ENCODE measurements at regions of chr2 and their contacts with region 1.

Region 1: DNA sequence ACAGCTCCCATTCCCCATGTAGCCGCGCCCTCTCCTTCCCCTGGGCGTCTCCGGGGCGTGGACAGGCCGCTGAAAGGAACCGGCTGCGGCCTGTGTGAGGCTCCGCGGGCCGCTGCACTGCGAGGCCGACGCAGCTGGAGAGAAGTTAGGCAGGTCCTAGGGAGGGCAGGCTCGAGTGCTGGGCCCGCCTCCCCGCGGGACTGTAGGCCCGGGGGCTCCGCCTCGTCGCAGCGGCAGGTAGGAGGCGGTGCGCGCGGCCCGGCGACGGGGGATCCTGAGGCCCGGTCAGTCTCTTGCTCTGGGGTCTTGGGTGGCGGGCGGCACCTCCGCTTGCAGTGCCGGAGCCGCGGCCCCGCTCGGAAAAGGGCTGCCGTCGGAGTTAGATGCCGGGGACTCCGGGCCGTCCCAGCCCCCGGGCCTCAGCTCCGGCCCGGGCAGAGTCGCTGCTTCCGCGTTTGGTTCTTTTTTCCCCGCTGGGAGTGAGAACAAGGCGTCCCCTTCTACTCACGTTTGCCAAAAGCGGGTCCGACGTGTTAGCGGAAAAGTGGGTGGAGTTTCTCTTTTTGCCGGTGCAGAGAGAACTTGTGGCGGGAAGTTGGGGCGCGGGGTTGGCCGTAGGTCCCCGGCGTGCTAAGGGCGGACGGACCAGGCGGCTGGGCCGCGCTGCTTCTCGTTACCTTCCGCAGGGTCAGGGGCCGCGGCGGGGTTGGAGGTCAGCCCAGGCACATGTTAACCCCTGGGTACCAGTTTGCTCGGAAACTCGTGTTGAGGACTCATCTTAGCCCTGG is at the start of gene VRK2:
- DNase-seq: peak; percentile 94
- H3K4me3 ChIP-seq: peak within 1 kb of the TSS; percentile 65 to 76 (median 74)
- H3K27ac ChIP-seq: peak within 1 kb of the TSS; percentile 88 to 94 (median 90)
- H3K4me1 ChIP-seq: peaks cover 22 to 34% (median 26%) of the 10 kb centered on the region in 4 donors
- H3K27me3 ChIP-seq: no peaks in the 10 kb centered on the region
- CTCF ChIP-seq: peak; percentile 7 to 31 (median 7)
- EP300 ChIP-seq: no peak
- POLR2A ChIP-seq: no peak
- total RNA-seq, gene VRK2: 25.8 to 31.3 (median 28.7) TPM

Region 2: DNA sequence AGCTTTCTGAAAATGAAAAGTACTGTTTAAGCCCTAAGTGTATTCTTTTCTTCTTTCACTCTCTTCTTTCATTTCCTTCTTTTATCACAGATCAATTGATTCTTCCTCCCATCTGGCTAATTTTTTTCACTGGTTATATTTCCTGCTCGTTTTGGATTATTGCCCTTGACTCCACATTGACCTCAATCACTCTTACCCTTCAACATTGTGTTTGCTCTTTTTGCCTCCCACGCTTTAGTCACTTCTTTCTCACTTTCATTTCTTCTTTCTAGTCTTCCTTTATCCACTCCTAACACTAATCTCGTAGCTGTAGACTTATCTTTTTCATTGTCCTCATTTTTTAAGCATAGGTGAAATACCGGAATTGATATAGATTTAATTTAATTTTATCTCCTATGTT is 320.5 kb before region 1 on chr2:
- intact Hi-C with region 1: no loop called
- DNase-seq: no peak
- H3K4me3 ChIP-seq: no peak overlapping the region
- H3K27ac ChIP-seq: no peak overlapping the region
- H3K4me1 ChIP-seq: no peaks in the 10 kb centered on the region
- H3K27me3 ChIP-seq: no peaks in the 10 kb centered on the region
- CTCF ChIP-seq: no peak
- EP300 ChIP-seq: no peak
- POLR2A ChIP-seq: no peak

Region 3: DNA sequence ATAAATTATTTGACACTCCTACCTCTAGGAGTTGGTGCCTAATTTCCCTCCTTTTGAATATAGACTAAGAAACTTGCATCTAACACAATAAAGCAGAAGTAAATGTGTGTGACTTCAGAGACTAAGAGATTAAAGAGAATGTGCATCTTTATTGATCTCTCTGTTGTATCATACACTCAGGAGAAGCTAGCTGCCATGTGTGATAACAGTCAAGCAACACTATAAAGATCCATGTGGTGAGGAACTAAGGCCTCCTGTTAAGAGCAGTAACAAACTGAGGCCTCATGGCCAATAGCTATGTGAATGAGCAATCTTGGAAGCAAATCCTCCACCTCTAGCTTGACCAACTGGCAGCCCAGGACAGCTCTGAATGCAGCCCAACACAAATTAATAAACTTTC is 191.0 kb after region 1 on chr2:
- intact Hi-C with region 1: loop called (anchors 10 kb)
- DNase-seq: no peak
- H3K4me3 ChIP-seq: no peak overlapping the region
- H3K27ac ChIP-seq: no peak overlapping the region
- H3K4me1 ChIP-seq: peaks cover 4 to 18% (median 10%) of the 10 kb centered on the region in 4 donors
- H3K27me3 ChIP-seq: no peaks in the 10 kb centered on the region
- CTCF ChIP-seq: no peak
- EP300 ChIP-seq: no peak
- POLR2A ChIP-seq: no peak

Measured in esophagus muscularis mucosa (tissue), 4 donors.